ENCODE measurements at regions of chr3 and their contacts with region 1.

Region 1: GRCh38 chr3:54853573-54854404 is 74.1 kb downstream of the LRTM1 start:
- DNase-seq: peak; percentile 56
- H3K4me3 ChIP-seq: no peak overlapping the region
- CTCF ChIP-seq: peak; percentile 78

Region 2: GRCh38 chr3:55746808-55747413 is 893.1 kb after region 1 on chr3:
- in situ Hi-C with region 1: loop called (anchors 25 kb)
- DNase-seq: no peak
- H3K4me3 ChIP-seq: no peak overlapping the region
- CTCF ChIP-seq: peak; percentile 45